ENCODE measurements at regions of chr3 and their contacts with region 1.

Region 1: GRCh38 chr3:126493739-126494138 is 18.0 kb upstream of the ZXDC start:
- DNase-seq: no peak
- ATAC-seq: no peak

Region 2: GRCh38 chr3:124860599-124860998 is 1633.1 kb before region 1 on chr3:
- intact Hi-C with region 1: loop called (anchors 5 kb)
- DNase-seq: peak; percentile 64
- ATAC-seq: peak; percentile 58

Region 3: GRCh38 chr3:126216416-126216815 is 277.3 kb before region 1 on chr3:
- intact Hi-C with region 1: no loop called
- DNase-seq: no peak
- ATAC-seq: no peak

Region 4: GRCh38 chr3:126522363-126522788 is 28.6 kb after region 1 on chr3:
- intact Hi-C with region 1: no loop called
- DNase-seq: peak; percentile 77
- ATAC-seq: peak; percentile 56

Measured in sciatic nerve (tissue), 2 donors.